AG04449 (cell line): ENCODE measurements at regions of chr19 and their contacts with region 1.

Region 1: DNA sequence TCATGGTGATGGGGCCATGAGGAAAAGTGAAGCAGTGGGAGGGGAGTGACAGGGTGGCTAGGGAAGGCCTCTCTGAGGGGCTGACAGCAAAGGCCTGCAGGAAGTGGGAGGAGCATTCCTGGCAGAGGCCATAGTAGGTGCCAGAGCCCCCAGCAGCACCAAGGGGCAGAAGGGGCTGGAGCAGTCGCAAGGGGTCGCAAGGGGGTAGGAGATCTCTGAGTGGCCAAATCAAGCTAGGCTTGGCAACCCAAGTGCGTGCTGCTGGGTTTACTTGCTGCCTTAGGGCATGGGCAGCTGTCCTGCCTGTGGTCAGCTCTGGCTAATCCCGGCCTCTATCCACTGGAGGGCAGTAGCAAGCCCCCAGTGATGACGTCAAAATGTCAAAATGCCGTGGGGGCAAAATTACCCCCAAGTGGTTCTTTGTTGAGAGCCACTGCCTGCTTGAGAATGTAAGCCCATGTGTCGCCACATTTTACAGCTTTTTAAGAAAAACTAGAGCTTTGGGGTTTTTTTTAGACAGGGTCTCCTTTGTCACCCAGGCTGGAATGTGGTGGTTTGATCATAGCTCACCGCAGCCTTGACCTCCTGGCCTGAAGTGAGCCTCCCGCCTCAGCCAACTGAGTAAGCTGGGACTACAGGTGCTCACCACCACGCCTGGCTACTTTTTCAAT is 11.8 kb downstream of the CCDC97 start:
- DNase-seq: no peak
- H3K4me3 ChIP-seq: no peak overlapping the region
- CTCF ChIP-seq: peak; percentile 72

Region 2: DNA sequence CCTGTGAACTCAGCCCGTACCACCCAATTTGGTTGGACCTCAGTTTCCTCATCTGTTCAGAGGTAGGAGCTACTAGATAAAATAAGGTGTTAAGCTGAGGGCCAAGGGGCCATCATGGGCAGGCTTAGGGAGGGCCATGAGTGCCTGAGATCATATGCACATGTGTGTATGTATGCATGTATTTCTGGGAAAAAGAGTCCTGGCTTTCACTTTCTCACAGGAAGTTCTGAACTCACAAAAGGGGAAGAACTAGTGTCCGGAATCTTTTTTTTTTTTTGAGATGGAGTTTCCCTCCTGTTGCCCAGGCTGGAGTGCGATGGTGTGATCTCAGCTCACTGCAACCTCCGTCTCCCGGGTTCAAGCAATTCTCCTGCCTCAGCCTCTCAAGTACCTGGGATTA is 13.1 kb after region 1 on chr19:
- CTCF ChIA-PET with region 1: interaction called, 11 read pairs
- POLR2A ChIA-PET with region 1: interaction called, 5 read pairs
- DNase-seq: no peak
- H3K4me3 ChIP-seq: no peak overlapping the region
- CTCF ChIP-seq: no peak

Region 3: GRCh38 chr19:41363753-41364523 is 42.2 kb after region 1 on chr19 and contains the start of gene B9D2:
- CTCF ChIA-PET with region 1: interaction called, 13 read pairs
- POLR2A ChIA-PET with region 1: no interaction called
- DNase-seq: peak; percentile 87
- H3K4me3 ChIP-seq: peak within 1 kb of the TSS; percentile 98
- CTCF ChIP-seq: no peak

Region 4: GRCh38 chr19:41409288-41409687 is 87.6 kb after region 1 on chr19:
- CTCF ChIA-PET with region 1: no interaction called
- POLR2A ChIA-PET with region 1: no interaction called
- DNase-seq: no peak
- H3K4me3 ChIP-seq: no peak overlapping the region
- CTCF ChIP-seq: no peak